ENCODE measurements at regions of chr2 and their contacts with region 1.

Region 1: DNA sequence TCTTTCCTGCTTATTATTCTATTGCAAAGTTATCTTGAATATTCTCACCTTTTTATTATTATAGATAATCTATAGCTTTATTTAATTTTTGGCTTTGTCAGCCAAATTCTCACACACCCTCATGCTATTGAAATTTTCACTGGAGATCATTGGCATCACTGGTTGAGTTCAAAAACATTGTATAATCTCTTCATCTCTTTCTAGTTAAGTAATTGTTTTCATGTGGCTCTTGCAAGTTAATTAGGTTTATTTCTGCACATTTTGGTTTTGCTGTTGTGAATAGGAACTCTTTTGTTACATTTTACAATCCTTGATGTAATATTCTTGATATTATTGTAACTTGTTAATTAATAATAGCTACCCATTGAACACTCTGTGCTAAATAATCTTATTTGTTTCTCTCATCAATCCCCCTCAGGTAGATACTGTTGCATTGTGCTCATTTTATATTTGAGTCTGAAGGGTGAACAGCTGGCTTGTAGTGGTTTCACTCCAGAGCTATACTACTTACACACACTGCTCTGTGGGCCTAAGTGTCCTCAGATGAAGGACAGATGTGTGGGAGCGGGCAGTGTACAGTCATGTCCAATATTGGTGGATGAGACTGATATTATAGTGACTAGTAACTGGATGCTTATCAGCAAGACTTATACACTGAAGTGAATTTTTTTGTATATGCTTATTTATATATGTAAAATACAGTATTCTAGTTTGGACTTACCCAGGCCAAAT is 112.7 kb downstream of the LCLAT1 start:
- DNase-seq: no peak
- H3K4me3 ChIP-seq: no peak overlapping the region
- H3K27ac ChIP-seq: no peak overlapping the region
- H3K4me1 ChIP-seq: no peaks in the 10 kb centered on the region
- H3K27me3 ChIP-seq: no peaks in the 10 kb centered on the region
- CTCF ChIP-seq: no peak

Region 2: GRCh38 chr2:30601375-30601774 is 41.7 kb after region 1 on chr2:
- CTCF ChIA-PET with region 1: no interaction called
- POLR2A ChIA-PET with region 1: no interaction called
- intact Hi-C with region 1: loop called (anchors 2 kb)
- DNase-seq: no peak
- H3K4me3 ChIP-seq: no peak overlapping the region
- H3K27ac ChIP-seq: no peak overlapping the region
- H3K4me1 ChIP-seq: no peaks in the 10 kb centered on the region
- H3K27me3 ChIP-seq: no peaks in the 10 kb centered on the region
- CTCF ChIP-seq: no peak

Measured in PC-9 (cell line).